Right ventricle myocardium inferior (tissue), 1 donor: ENCODE measurements at regions of chr9 and their contacts with region 1.

Region 1: DNA sequence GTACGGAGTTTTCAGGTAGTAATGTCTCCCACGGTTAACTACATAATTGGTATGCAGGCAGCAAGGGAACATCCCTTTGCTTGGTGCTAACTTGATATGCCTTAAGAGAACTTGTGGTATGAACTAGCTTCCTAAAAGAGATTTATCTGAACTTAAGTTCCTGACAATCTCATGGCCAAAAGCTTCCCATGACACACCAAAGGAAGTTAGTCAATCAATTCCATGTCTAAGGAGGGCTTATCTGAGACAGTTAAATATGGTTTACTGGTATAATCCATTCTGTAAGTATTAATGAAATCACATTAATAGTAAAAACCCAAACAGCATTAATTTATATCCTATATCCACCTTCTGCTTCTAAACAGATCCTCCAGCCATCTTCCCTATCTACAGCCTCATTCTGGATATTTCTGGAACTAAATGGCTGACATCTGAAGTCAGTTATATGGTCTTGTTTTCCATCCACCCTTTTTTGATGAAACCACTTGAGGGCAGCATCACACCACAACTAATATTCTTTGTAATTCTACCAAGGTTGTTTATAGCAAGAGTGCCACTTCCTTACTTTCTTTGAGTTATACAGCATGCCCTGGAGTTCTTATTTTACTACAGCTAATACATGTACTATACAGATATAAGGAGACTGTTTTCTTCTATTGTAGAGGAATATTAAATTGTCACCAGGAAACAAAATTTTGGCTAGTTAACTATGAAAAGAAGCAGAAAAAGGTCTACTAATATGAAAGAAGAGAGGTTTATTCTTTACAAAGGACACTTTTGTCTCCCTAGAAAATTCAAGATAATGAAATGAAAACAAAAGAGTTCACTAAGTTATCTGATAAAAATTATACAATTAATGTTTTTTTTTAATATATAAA is 34.7 kb downstream of the SHOC1 start:
- DNase-seq: no peak
- ATAC-seq: peak; percentile 72

Region 2: GRCh38 chr9:111805830-111806241 is 45.8 kb after region 1 on chr9:
- intact Hi-C with region 1: no loop called
- DNase-seq: no peak
- ATAC-seq: no peak

Region 3: DNA sequence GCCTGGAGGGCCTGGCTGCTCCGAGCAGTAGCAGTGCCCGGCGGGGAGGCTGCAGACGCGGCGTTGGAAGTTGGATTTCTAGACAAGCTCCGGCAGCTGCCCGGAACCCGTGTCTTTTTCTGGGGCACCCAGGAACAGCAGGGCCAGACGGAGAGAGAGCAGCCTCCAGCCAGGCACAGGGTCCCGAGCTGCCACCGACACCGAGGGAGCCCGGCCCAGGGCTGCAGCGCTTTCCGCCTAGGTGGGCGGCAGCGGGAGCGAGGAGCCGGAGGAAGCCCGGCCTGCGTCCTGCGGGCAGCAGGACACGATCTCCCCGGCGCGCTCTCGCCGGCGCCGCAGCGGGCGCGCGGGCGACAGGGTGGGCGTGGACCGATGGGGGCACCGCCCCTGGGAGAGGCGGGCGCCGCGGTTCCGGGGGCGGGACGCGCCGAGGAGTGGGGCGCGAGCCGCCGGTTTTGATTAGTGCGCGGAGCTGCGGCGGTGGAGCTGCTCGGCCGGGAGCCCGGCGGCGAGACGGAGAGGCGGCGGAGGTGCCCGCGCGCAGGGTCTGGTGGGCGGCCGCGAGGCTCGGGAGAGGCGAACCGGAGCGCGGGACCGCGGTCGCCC is 136.5 kb after region 1 on chr9 and contains the start of gene UGCG:
- intact Hi-C with region 1: loop called (anchors 10 kb)
- DNase-seq: peak; percentile 95
- ATAC-seq: peak; percentile 99
- total RNA-seq, gene UGCG: 12.8 TPM

Region 4: GRCh38 chr9:111975709-111976108 is 215.7 kb after region 1 on chr9:
- intact Hi-C with region 1: no loop called
- DNase-seq: no peak
- ATAC-seq: peak; percentile 56

Region 5: GRCh38 chr9:112074250-112075008 is 314.4 kb after region 1 on chr9:
- intact Hi-C with region 1: loop called (anchors 1 kb)
- DNase-seq: peak; percentile 70
- ATAC-seq: peak; percentile 84

Region 6: DNA sequence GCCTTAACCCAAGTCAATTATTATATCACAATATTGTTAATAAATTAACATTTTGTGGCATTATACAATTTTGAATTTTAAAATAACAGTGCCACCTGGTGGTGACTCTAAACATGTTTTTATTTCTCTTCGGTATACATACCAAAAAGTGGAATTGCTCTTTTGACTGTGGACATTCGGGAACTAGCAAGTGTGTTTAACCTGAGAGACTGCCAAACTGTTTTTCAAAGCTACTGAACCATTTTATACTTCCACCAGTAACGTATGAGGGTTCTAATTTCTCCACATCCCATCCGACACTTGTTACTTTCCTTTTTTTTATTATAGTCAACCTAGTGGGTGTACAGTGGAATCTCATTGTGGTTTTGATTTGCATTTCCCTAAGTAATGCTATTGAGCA is 601.6 kb after region 1 on chr9:
- intact Hi-C with region 1: loop called (anchors 5 kb)
- DNase-seq: no peak
- ATAC-seq: no peak